Activated B cell treated with CpG ODN at 0.5 μM for 24 hours (primary cell): ENCODE measurements at regions of chrX and their contacts with region 1.

Region 1: DNA sequence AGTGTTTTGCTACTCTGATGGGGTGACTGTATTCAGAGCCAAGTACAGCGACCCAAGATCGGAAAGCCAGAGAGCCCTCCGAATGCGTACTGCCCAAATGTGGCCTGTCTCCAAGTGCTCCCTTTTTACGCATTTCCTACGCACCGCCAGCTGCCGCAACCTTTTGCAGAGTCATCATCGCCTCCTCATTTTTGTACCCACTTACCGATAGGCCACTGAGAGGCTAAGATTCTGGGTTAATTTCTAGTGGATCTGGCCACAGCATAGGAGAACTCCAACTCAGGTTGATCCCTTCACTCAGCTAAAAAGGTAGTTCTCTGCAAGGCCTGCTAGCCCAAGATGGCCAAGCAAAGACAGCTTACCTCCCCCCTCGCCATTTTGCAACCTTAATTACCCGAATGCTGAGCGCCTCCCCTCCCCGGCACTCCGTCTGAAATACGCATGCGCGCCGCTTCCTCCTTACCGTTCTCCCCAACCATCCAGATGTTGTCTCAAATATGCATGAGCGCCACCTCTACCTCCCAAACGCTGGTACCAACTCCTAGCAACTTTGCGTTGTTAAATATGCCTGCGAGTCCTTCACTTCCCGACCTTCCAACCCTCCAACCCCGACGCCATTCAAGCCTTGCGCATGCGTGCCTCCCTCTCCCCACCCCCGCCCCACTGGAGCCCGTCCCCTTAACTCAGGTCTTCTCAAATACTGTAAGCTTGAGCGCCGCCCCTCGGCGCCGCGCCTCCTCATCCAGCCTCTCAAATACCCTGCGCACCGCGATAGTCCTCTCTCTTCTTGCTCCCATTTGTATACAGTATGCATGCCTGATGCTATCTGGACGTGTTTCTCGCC is 11.8 kb upstream of the ZCCHC13 start:
- DNase-seq: peak; percentile 57
- ATAC-seq: peak; percentile 87
- H3K4me3 Mint-ChIP-seq: peak overlapping the region; percentile 98
- H3K27ac Mint-ChIP-seq: peak overlapping the region; percentile 97
- H3K4me1 Mint-ChIP-seq: peaks cover 13% of the 10 kb centered on the region
- H3K27me3 Mint-ChIP-seq: no peaks in the 10 kb centered on the region
- CTCF ChIP-seq: no peak

Region 2: GRCh38 chrX:73562984-73563737 is 729.0 kb before region 1 on chrX and contains the start of gene CHIC1:
- CTCF ChIA-PET with region 1: no interaction called
- POLR2A ChIA-PET with region 1: no interaction called
- intact Hi-C with region 1: loop called (anchors 2 kb)
- DNase-seq: peak; percentile 51
- ATAC-seq: peak; percentile 73
- H3K4me3 Mint-ChIP-seq: peak within 1 kb of the TSS; percentile 97
- H3K27ac Mint-ChIP-seq: peak within 1 kb of the TSS; percentile 99
- H3K4me1 Mint-ChIP-seq: peaks cover 27% of the 10 kb centered on the region
- H3K27me3 Mint-ChIP-seq: no peaks in the 10 kb centered on the region
- CTCF ChIP-seq: no peak
- total RNA-seq, gene CHIC1: 12.9 and 14.0 TPM in 2 replicates

Region 3: GRCh38 chrX:74207539-74207938 is 84.6 kb before region 1 on chrX:
- CTCF ChIA-PET with region 1: no interaction called
- POLR2A ChIA-PET with region 1: no interaction called
- intact Hi-C with region 1: no loop called
- DNase-seq: no peak
- ATAC-seq: no peak
- H3K4me3 Mint-ChIP-seq: no peak overlapping the region
- H3K27ac Mint-ChIP-seq: no peak overlapping the region
- H3K4me1 Mint-ChIP-seq: no peaks in the 10 kb centered on the region
- H3K27me3 Mint-ChIP-seq: no peaks in the 10 kb centered on the region
- CTCF ChIP-seq: no peak

Region 4: DNA sequence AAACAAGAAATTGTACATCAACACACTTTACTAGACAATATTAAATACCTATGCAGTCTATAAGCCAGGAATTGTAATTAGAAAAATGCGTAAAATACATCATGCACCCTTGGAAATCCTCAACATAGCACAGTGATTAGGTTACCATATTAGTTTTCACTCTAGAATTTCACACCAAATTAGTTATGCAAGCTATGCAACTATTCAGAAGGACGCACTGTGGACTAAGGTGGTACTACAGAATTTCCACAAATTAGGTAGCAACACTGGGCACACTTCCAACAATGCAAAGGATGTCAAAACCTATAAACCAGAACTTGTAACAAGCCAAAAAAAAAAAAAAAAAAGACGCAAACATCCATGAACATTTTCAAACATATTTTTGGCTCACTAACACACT is 59.3 kb before region 1 on chrX:
- CTCF ChIA-PET with region 1: no interaction called
- POLR2A ChIA-PET with region 1: no interaction called
- intact Hi-C with region 1: loop called (anchors 10 kb)
- DNase-seq: no peak
- ATAC-seq: no peak
- H3K4me3 Mint-ChIP-seq: no peak overlapping the region
- H3K27ac Mint-ChIP-seq: no peak overlapping the region
- H3K4me1 Mint-ChIP-seq: no peaks in the 10 kb centered on the region
- H3K27me3 Mint-ChIP-seq: no peaks in the 10 kb centered on the region
- CTCF ChIP-seq: no peak

Region 5: GRCh38 chrX:74382613-74383012 is 90.4 kb after region 1 on chrX:
- CTCF ChIA-PET with region 1: no interaction called
- POLR2A ChIA-PET with region 1: no interaction called
- intact Hi-C with region 1: loop called (anchors 2 kb)
- DNase-seq: peak; percentile 13
- ATAC-seq: no peak
- H3K4me3 Mint-ChIP-seq: no peak overlapping the region
- H3K27ac Mint-ChIP-seq: no peak overlapping the region
- H3K4me1 Mint-ChIP-seq: no peaks in the 10 kb centered on the region
- H3K27me3 Mint-ChIP-seq: peaks cover 3% of the 10 kb centered on the region
- CTCF ChIP-seq: no peak

Region 6: GRCh38 chrX:74536152-74536831 is 244.1 kb after region 1 on chrX:
- CTCF ChIA-PET with region 1: no interaction called
- POLR2A ChIA-PET with region 1: no interaction called
- intact Hi-C with region 1: loop called (anchors 5 kb)
- DNase-seq: peak; percentile 36
- ATAC-seq: peak; percentile 66
- H3K4me3 Mint-ChIP-seq: peak overlapping the region; percentile 83
- H3K27ac Mint-ChIP-seq: peak overlapping the region; percentile 24
- H3K4me1 Mint-ChIP-seq: peaks cover 13% of the 10 kb centered on the region
- H3K27me3 Mint-ChIP-seq: no peaks in the 10 kb centered on the region
- CTCF ChIP-seq: no peak

Region 7: DNA sequence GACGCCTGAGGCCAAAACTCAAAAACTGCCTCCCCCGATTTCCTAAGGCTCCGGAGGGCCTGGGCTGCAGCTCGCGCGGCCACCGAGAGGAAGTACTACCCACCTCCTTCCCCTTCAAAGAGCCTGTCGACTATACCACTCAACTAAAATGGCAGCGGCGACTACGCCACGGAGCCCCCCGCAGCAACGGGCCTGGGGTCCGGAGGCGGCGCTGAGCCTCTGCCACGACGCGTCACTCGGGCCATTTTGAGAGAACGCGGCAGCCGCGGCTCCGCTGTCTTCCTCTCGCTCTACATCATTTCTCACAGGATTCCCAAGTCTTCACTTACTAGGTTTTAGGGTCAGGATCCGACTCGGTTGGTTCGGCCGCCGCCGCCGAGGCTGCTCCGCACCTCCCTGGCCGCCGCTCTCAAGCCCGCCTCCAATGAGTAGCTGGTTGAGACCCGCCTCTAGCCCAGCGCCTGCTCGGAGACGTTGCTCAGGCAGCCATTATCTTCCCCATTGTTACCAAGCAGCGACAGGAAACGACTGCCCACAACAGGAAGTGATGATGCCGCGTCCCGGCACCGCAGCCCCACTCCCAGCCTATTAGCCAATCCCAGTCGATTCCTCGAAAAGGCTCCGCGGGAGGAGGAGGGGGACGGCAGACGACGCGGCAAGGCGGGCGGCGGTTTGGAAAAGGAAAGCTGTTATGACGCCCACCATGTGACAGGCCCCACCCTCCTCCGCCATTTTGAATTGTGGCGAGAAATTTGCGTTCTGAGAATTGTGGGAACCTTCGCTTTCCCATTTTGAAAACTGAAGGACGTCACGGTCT is 322.1 kb after region 1 on chrX and contains the start of gene RLIM:
- CTCF ChIA-PET with region 1: no interaction called
- POLR2A ChIA-PET with region 1: interaction called, 9 read pairs
- intact Hi-C with region 1: loop called (anchors 1 kb)
- DNase-seq: peak; percentile 74
- ATAC-seq: peak; percentile 83
- H3K4me3 Mint-ChIP-seq: peak within 1 kb of the TSS; percentile 96
- H3K27ac Mint-ChIP-seq: peak within 1 kb of the TSS; percentile 96
- H3K4me1 Mint-ChIP-seq: peaks cover 22% of the 10 kb centered on the region
- H3K27me3 Mint-ChIP-seq: no peaks in the 10 kb centered on the region
- CTCF ChIP-seq: no peak
- total RNA-seq, gene RLIM: 32.2 and 34.0 TPM in 2 replicates